AG04450 (cell line): ENCODE measurements at regions of chr14 and their contacts with region 1.

Region 1: GRCh38 chr14:50860478-50861086 is 11.3 kb upstream of the ABHD12B start:
- DNase-seq: peak; percentile 61
- H3K4me3 ChIP-seq: peak overlapping the region; percentile 56
- H3K27ac ChIP-seq: no peak overlapping the region
- H3K27me3 ChIP-seq: no peaks in the 10 kb centered on the region
- CTCF ChIP-seq: peak; percentile 74

Region 2: DNA sequence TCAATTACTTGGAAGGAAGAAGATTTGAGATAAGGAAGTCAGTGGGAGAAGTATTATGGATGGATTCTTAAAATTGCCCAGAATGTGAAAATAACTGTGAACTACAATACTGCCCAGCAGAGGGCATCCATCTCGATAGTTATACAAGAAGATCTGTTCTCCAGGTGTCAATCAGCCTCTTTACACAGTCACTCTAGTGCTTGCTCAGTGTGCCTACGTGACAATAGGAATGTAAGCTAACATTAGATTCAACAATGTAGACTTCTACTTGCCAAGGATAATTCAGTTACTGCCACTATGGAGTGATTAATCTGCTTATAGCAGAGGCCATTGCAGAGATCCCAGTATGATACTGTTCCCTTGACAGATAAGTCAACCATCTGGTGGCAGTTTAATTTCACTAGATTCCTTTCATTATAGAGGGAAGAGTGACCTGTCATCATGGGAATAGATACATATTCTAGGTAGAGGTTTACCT is 317.6 kb before region 1 on chr14:
- CTCF ChIA-PET with region 1: interaction called, 12 read pairs
- POLR2A ChIA-PET with region 1: no interaction called
- DNase-seq: no peak
- H3K4me3 ChIP-seq: no peak overlapping the region
- H3K27ac ChIP-seq: no peak overlapping the region
- H3K27me3 ChIP-seq: peaks cover 2% of the 10 kb centered on the region
- CTCF ChIP-seq: peak; percentile 60

Region 3: DNA sequence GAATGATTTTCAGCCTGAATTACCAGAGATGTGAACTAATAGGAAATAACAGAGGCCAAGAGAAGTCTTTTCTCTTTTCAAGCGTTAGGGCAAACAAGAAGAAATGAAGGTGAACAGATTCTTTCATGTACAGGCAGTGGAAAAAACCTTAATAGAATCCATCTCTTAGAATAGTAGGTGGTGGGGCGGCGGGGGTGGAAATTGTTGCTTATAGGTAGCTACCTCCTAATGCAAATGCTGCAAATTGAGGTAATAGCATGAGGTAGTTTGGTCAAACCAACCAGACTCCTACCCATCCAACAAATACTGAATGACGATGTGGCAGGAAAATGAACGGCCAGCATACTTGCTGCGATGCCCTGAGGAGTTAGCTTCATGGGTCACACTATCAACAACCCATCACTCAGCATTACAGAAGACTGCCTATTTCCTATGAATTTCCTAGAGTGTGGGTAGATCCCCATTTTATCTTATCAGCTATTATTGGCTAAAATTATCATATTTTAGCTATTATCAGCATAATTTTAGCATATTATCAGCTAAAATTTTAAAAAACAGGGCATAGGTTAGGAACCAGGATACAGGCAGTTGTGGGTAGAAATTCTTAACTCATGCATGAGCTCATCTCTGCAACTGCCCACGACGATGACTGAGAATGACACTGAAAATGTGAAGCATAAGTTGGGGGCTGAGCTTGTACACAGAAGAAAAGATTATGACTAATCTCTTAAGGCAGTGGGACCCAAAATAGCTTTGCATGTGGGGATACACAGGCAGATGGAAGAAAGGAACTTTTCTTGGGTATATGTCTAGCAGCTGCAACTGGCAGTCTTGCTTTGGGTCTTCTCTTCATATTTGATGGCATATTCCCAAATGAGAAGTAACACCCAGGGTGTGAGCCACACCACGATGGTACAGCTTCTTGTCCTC is 98.3 kb before region 1 on chr14:
- CTCF ChIA-PET with region 1: interaction called, 13 read pairs
- POLR2A ChIA-PET with region 1: interaction called, 4 read pairs
- DNase-seq: peak; percentile 38
- H3K4me3 ChIP-seq: no peak overlapping the region
- H3K27ac ChIP-seq: no peak overlapping the region
- H3K27me3 ChIP-seq: no peaks in the 10 kb centered on the region
- CTCF ChIP-seq: no peak

Region 4: GRCh38 chr14:50792051-50792477 is 68.5 kb before region 1 on chr14:
- CTCF ChIA-PET with region 1: interaction called, 11 read pairs
- POLR2A ChIA-PET with region 1: no interaction called
- DNase-seq: no peak
- H3K4me3 ChIP-seq: no peak overlapping the region
- H3K27ac ChIP-seq: no peak overlapping the region
- H3K27me3 ChIP-seq: no peaks in the 10 kb centered on the region
- CTCF ChIP-seq: no peak

Region 5: GRCh38 chr14:50830932-50831725 is 29.5 kb before region 1 on chr14 and contains the start of gene NIN:
- CTCF ChIA-PET with region 1: interaction called, 32 read pairs
- POLR2A ChIA-PET with region 1: interaction called, 3 read pairs
- DNase-seq: no peak
- H3K4me3 ChIP-seq: peak within 1 kb of the TSS; percentile 79
- H3K27ac ChIP-seq: peak within 1 kb of the TSS; percentile 39
- H3K27me3 ChIP-seq: no peaks in the 10 kb centered on the region
- CTCF ChIP-seq: no peak
- polyA plus RNA-seq, gene NIN: 25.1 and 26.9 TPM in 2 replicates

Region 6: GRCh38 chr14:50920482-50921230 is 60.1 kb after region 1 on chr14:
- CTCF ChIA-PET with region 1: interaction called, 14 read pairs
- POLR2A ChIA-PET with region 1: interaction called, 4 read pairs
- DNase-seq: peak; percentile 48
- H3K4me3 ChIP-seq: no peak overlapping the region
- H3K27ac ChIP-seq: peak overlapping the region; percentile 89
- H3K27me3 ChIP-seq: no peaks in the 10 kb centered on the region
- CTCF ChIP-seq: no peak